ENCODE measurements at regions of chr3 and their contacts with region 1.

Region 1: DNA sequence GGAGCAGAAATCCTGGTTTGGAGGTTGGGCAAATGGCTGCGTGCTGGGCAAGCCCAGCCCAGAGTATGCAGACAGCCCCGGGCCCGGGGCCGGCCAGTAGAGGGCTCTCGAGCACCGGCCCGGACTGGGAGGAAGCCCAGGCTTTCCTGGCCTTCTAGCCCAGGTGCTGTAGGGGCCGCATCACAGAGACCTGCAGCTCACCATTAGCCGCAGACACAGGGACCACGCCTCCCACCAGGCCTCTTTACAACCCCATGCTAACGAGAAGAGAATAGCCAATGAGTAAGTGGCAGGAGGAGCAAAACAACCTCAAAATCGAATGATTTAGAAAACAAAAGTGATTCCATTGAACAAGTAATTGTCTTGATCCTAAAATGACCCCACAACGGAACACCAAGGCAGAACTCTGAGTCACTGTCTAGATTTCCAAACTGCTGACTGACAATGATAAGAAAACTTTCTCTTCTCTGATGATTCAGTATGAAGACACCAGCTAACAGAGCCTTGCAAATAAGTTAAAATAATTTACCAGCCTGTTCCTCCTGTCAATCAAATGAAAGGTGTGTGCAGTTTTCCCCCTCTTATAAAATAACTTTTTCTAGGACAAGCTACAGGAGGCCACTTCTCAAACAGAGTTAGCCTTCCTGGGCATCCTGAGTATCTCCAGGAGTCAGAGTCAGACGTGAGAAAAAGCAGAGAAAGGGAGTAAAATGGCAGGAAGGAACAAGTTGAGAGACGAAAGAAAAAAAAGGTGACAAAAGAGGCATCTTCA is 102.2 kb downstream of the DGKG start:
- DNase-seq: peak; percentile 66
- ATAC-seq: peak; percentile 62
- H3K4me3 Mint-ChIP-seq: no peak overlapping the region
- H3K27ac Mint-ChIP-seq: peak overlapping the region; percentile 76
- H3K4me1 Mint-ChIP-seq: peaks cover 40% of the 10 kb centered on the region
- H3K27me3 Mint-ChIP-seq: no peaks in the 10 kb centered on the region
- CTCF ChIP-seq: peak; percentile 13

Region 2: GRCh38 chr3:185983495-185984141 is 276.2 kb before region 1 on chr3:
- CTCF ChIA-PET with region 1: interaction called, 15 read pairs
- POLR2A ChIA-PET with region 1: no interaction called
- intact Hi-C with region 1: loop called (anchors 1 kb)
- DNase-seq: peak; percentile 37
- ATAC-seq: peak; percentile 82
- H3K4me3 Mint-ChIP-seq: no peak overlapping the region
- H3K27ac Mint-ChIP-seq: peak overlapping the region; percentile 30
- H3K4me1 Mint-ChIP-seq: peaks cover 4% of the 10 kb centered on the region
- H3K27me3 Mint-ChIP-seq: peaks cover 14% of the 10 kb centered on the region
- CTCF ChIP-seq: peak; percentile 91

Region 3: GRCh38 chr3:186185194-186185787 is 74.5 kb before region 1 on chr3:
- CTCF ChIA-PET with region 1: no interaction called
- POLR2A ChIA-PET with region 1: interaction called, 4 read pairs
- intact Hi-C with region 1: loop called (anchors 2 kb)
- DNase-seq: no peak
- ATAC-seq: peak; percentile 91
- H3K4me3 Mint-ChIP-seq: peak overlapping the region; percentile 49
- H3K27ac Mint-ChIP-seq: peak overlapping the region; percentile 85
- H3K4me1 Mint-ChIP-seq: peaks cover 16% of the 10 kb centered on the region
- H3K27me3 Mint-ChIP-seq: no peaks in the 10 kb centered on the region
- CTCF ChIP-seq: no peak

Region 4: GRCh38 chr3:186307594-186308221 is 47.9 kb after region 1 on chr3:
- CTCF ChIA-PET with region 1: no interaction called
- POLR2A ChIA-PET with region 1: no interaction called
- intact Hi-C with region 1: no loop called
- DNase-seq: no peak
- ATAC-seq: no peak
- H3K4me3 Mint-ChIP-seq: no peak overlapping the region
- H3K27ac Mint-ChIP-seq: no peak overlapping the region
- H3K4me1 Mint-ChIP-seq: no peaks in the 10 kb centered on the region
- H3K27me3 Mint-ChIP-seq: no peaks in the 10 kb centered on the region
- CTCF ChIP-seq: no peak

Region 5: DNA sequence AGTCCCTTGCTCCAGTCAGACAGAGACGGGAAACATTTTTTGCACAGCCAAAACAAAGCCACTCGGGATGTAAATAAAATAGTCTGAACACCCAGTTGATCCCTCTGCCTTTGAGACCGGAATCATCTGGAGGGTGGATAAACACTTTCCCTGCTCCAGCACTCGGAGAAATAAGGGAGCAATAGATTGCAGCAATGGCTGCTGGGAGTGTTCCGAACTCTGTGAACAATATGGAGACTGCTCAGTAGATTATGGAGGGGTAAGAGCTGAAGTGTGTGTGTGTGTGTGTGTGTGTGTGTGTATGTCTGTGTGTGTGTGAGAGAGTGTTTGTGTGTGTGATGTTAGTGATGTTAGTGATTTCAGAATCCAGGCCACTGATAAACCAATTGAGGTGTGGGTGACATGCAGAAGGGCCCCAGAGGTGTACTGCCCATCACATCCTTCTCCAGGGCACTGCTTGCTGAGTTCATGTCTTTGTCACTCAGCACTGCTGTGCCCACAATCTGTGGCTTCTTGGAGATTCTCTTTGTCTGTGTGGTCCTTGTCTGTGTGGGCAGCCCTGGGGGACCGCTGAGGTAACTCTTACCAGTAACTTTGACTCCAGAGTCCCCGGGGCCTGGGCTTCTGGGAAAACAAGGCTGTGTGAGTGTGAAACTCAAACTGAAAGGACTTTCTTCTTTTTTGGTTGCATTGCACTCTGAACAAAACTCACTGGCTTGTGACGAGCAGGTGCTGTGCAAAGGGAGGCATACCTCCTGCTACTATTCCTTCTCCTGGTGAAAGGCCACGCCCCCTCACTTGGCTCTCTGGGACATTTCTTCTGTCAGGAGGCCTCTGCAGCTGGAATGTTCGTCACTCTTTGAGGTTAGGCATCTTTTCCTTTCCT is 261.4 kb after region 1 on chr3:
- CTCF ChIA-PET with region 1: interaction called, 10 read pairs
- POLR2A ChIA-PET with region 1: interaction called, 10 read pairs
- intact Hi-C with region 1: no loop called
- DNase-seq: peak; percentile 33
- ATAC-seq: peak; percentile 33
- H3K4me3 Mint-ChIP-seq: peak overlapping the region; percentile 41
- H3K27ac Mint-ChIP-seq: peak overlapping the region; percentile 87
- H3K4me1 Mint-ChIP-seq: peaks cover 76% of the 10 kb centered on the region
- H3K27me3 Mint-ChIP-seq: peaks cover 2% of the 10 kb centered on the region
- CTCF ChIP-seq: no peak

Region 6: GRCh38 chr3:186540221-186540834 is 280.5 kb after region 1 on chr3:
- CTCF ChIA-PET with region 1: interaction called, 346 read pairs
- POLR2A ChIA-PET with region 1: interaction called, 24 read pairs
- intact Hi-C with region 1: loop called (anchors 1 kb)
- DNase-seq: peak; percentile 55
- ATAC-seq: peak; percentile 88
- H3K4me3 Mint-ChIP-seq: no peak overlapping the region
- H3K27ac Mint-ChIP-seq: no peak overlapping the region
- H3K4me1 Mint-ChIP-seq: peaks cover 35% of the 10 kb centered on the region
- H3K27me3 Mint-ChIP-seq: no peaks in the 10 kb centered on the region
- CTCF ChIP-seq: no peak

Region 7: GRCh38 chr3:186826976-186827731 is 567.4 kb after region 1 on chr3:
- CTCF ChIA-PET with region 1: no interaction called
- POLR2A ChIA-PET with region 1: no interaction called
- intact Hi-C with region 1: loop called (anchors 10 kb)
- DNase-seq: peak; percentile 85
- ATAC-seq: peak; percentile 94
- H3K4me3 Mint-ChIP-seq: peak overlapping the region; percentile 71
- H3K27ac Mint-ChIP-seq: no peak overlapping the region
- H3K4me1 Mint-ChIP-seq: peaks cover 22% of the 10 kb centered on the region
- H3K27me3 Mint-ChIP-seq: peaks cover 47% of the 10 kb centered on the region
- CTCF ChIP-seq: no peak

Measured in activated B cell treated with CpG ODN at 0.5 μM for 24 hours (primary cell).